BJ (cell line): ENCODE measurements at regions of chr6 and their contacts with region 1.

Region 1: GRCh38 chr6:143940011-143940597 is 68.0 kb downstream of the PLAGL1 start:
- DNase-seq: no peak
- H3K4me3 ChIP-seq: no peak overlapping the region
- H3K27me3 ChIP-seq: no peaks in the 10 kb centered on the region; the same call in 1 of the 2 replicates
- CTCF ChIP-seq: peak; percentile 68

Region 2: GRCh38 chr6:143929975-143930374 is 10.1 kb before region 1 on chr6:
- CTCF ChIA-PET with region 1: interaction called, 33 read pairs
- POLR2A ChIA-PET with region 1: no interaction called
- DNase-seq: no peak
- H3K4me3 ChIP-seq: no peak overlapping the region
- H3K27me3 ChIP-seq: peaks cover 4% of the 10 kb centered on the region; the same call in 1 of the 2 replicates
- CTCF ChIP-seq: no peak

Region 3: GRCh38 chr6:143961886-143962873 is 22.1 kb after region 1 on chr6:
- CTCF ChIA-PET with region 1: interaction called, 12 read pairs
- POLR2A ChIA-PET with region 1: no interaction called
- DNase-seq: peak; percentile 26
- H3K4me3 ChIP-seq: no peak overlapping the region
- H3K27me3 ChIP-seq: no peaks in the 10 kb centered on the region
- CTCF ChIP-seq: peak; percentile 62

Region 4: GRCh38 chr6:144013486-144013909 is 73.4 kb after region 1 on chr6:
- CTCF ChIA-PET with region 1: interaction called, 26 read pairs
- POLR2A ChIA-PET with region 1: no interaction called
- DNase-seq: no peak
- H3K4me3 ChIP-seq: no peak overlapping the region
- H3K27me3 ChIP-seq: no peaks in the 10 kb centered on the region; the same call in 1 of the 2 replicates
- CTCF ChIP-seq: peak; percentile 84

Region 5: GRCh38 chr6:144055121-144055931 is 115.2 kb after region 1 on chr6:
- CTCF ChIA-PET with region 1: no interaction called
- POLR2A ChIA-PET with region 1: no interaction called
- DNase-seq: no peak
- H3K4me3 ChIP-seq: no peak overlapping the region
- H3K27me3 ChIP-seq: peaks cover 1% of the 10 kb centered on the region; the same call in 1 of the 2 replicates
- CTCF ChIP-seq: no peak